Dorsolateral prefrontal cortex (tissue), 120 donors: ENCODE measurements at regions of chr17 and their contacts with region 1.

Region 1: GRCh38 chr17:72120642-72121163 is at the start of gene SOX9:
- DNase-seq: peak; percentile 70 to 96 (median 94)
- H3K4me3 ChIP-seq: peak within 1 kb of the TSS; percentile 47 to 91 (median 79)
- H3K27ac ChIP-seq: peak within 1 kb of the TSS; percentile 49 to 95 (median 88)
- H3K27me3 ChIP-seq: peaks cover 0 to 60% (median 6%) of the 10 kb centered on the region in 45 donors
- CTCF ChIP-seq: no peak
- total RNA-seq, gene SOX9: 30.6 to 138 (median 57.7) TPM

Region 2: GRCh38 chr17:71237903-71238538 is 882.7 kb before region 1 on chr17:
- intact Hi-C with region 1: loop called (anchors 1 to 5 kb)
- DNase-seq: no peak
- H3K4me3 ChIP-seq: no peak overlapping the region
- H3K27ac ChIP-seq: no peak overlapping the region
- H3K27me3 ChIP-seq: no peaks in the 10 kb centered on the region
- CTCF ChIP-seq: peak in 54 of 56 donors; percentile 28 to 76 (median 52)

Region 3: DNA sequence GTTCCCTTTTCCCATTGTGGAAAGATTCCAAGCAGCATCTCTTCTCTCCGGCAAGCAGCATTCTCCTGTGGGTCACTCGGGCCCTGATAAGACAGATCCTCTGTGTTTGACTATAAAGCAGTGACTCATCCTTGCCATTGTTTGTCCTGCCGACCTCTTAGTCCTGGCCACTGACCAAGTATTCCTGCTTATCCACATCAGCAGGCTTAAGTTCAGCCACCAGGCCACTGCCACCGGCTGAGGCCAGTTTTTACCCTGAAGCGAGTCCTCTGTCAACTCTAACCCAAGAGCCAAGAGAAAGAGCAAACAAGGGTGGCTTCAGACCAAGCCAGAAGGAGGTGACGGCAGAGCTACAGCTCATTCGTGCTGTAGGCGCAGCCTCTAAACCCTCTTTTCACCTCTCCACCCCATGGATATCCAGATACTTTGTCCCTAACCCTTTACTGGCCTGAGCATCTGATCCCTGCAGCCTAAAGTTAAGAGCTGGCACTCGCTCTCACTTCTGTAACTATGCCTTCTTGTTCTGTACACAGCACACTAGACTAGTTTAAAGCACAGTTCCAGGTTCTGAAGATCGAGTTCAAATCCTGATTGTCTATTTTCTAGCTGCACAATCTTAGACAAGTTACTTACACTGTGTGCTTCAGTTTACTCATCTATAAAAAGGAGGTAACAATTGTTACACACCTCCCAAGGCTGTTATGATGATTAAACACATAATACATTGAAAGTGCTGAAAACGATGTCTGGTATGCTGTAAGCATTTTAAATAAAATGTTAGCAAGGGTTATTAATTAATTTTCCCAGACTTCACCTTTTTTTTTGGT is 31.1 kb after region 1 on chr17:
- intact Hi-C with region 1: loop called in 1 of 2 experiments (anchors 1 kb)
- DNase-seq: peak in 9 of 10 donors; percentile 46 to 81 (median 63)
- H3K4me3 ChIP-seq: peak overlapping the region in 53 of 59 donors; percentile 4 to 64 (median 37)
- H3K27ac ChIP-seq: peak overlapping the region; percentile 29 to 98 (median 93)
- H3K27me3 ChIP-seq: no peaks in the 10 kb centered on the region
- CTCF ChIP-seq: peak in 5 of 56 donors; percentile 4 to 16 (median 12)

Region 4: DNA sequence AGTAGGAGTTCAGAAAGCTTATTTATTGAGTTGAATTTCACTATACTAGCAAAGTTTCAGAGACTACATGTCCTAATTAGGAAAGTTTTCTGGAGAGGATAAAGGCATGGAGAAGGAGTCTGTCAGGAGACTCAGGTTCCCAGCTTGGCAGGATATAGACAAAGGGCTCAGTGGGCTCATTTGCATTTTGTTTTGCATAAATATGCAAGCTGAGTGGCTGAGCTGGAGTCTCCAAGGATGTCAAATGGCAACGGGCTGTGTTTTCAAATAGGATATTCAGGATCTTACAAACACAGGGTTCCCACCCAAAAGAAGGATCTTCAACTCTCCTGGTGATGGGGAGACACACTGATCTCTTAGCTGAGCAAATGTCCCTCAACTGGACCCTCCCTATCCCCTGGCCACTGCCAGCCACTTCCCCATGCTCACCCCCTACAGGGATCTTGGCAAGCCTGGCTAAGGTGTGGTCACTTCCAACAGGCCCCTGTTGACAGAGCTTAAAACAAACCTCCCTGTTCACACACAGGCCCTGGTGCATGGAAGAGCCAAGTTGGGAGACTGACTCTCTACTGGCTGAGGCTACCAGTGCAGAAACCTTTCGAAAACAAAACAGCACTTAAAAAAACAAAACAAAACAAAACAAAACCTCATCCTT is 61.7 kb after region 1 on chr17:
- intact Hi-C with region 1: no loop called
- DNase-seq: no peak
- H3K4me3 ChIP-seq: no peak overlapping the region
- H3K27ac ChIP-seq: peak overlapping the region in 12 of 59 donors; percentile 0 to 56 (median 22)
- H3K27me3 ChIP-seq: no peaks in the 10 kb centered on the region
- CTCF ChIP-seq: no peak

Region 5: GRCh38 chr17:72342627-72343527 is 222.2 kb after region 1 on chr17:
- intact Hi-C with region 1: loop called in 1 of 2 experiments (anchors 5 kb)
- DNase-seq: peak in 9 of 10 donors; percentile 31 to 70 (median 50)
- H3K4me3 ChIP-seq: peak overlapping the region in 55 of 59 donors; percentile 14 to 63 (median 36)
- H3K27ac ChIP-seq: peak overlapping the region in 52 of 59 donors; percentile 0 to 85 (median 66)
- H3K27me3 ChIP-seq: peaks cover 0 to 3% (median 0%) of the 10 kb centered on the region in 45 donors
- CTCF ChIP-seq: no peak

Region 6: GRCh38 chr17:72812823-72813222 is 692.1 kb after region 1 on chr17:
- intact Hi-C with region 1: no loop called
- DNase-seq: no peak
- H3K4me3 ChIP-seq: no peak overlapping the region
- H3K27ac ChIP-seq: no peak overlapping the region
- H3K27me3 ChIP-seq: no peaks in the 10 kb centered on the region
- CTCF ChIP-seq: no peak